ENCODE measurements at regions of chr15 and their contacts with region 1.

Region 1: GRCh38 chr15:101188637-101189408 is 63.0 kb downstream of the CHSY1 start:
- DNase-seq: peak; percentile 39
- ATAC-seq: peak; percentile 84
- H3K4me3 ChIP-seq: peak overlapping the region; percentile 65; the same call in 1 of the 2 replicates
- H3K27ac ChIP-seq: peak overlapping the region; percentile 67
- H3K4me1 ChIP-seq: peaks cover 17% of the 10 kb centered on the region
- H3K27me3 ChIP-seq: no peaks in the 10 kb centered on the region
- CTCF ChIP-seq: no peak
- EP300 ChIP-seq: peak in 1 of 2 experiments; percentile 76; a peak in 2 of 4 replicates
- POLR2A ChIP-seq: no peak
- RAD21 ChIP-seq: no peak

Region 2: DNA sequence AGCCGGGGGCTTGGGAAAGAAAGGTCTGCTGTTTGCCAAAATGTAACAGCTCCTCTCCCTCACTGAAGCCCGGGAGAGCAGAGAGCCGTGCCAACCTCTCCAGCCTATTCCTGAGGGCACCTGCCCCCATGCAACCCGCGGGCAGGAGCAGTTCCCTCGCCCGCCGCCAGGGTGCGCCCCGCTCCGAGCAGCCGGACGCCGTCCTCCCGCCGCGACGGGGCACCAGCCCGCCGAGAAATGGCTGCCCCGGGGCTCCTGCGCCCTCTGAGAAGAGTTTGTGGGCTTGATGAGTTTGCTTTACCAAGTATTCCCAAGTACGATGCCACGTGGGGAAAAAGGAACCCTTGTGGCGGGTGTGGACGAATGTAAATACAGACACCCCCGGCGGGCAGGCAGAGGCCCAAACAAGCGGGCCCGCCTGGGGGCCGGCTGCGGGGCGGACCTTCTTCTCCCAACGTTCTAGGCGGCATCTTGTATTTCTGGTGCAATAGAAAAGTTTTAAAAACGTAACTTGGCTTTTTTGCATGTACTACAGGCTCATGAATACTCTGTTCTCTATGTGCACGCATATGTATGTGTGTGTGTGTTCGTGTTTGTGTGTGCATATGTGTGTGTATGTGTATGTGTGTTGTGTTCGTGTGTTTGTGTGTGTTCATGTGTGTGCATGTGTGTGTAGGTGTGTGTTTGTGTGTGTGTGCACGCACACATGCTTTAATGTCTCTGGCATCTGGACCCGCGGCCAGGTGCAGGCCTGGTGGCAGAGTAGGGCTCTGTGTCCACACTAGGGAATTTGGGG is 99.8 kb before region 1 on chr15:
- CTCF ChIA-PET with region 1: interaction called, 3 read pairs
- POLR2A ChIA-PET with region 1: no interaction called
- RAD21 ChIA-PET with region 1: no interaction called
- SMC1A ChIA-PET with region 1: interaction called, 3 read pairs
- in situ Hi-C with region 1: no loop called
- intact Hi-C with region 1: loop called (anchors 2 kb)
- DNase-seq: no peak
- ATAC-seq: peak; percentile 98
- H3K4me3 ChIP-seq: no peak overlapping the region
- H3K27ac ChIP-seq: no peak overlapping the region
- H3K4me1 ChIP-seq: no peaks in the 10 kb centered on the region
- H3K27me3 ChIP-seq: no peaks in the 10 kb centered on the region
- CTCF ChIP-seq: peak; percentile 94 to 98 (median 97)
- EP300 ChIP-seq: no peak
- POLR2A ChIP-seq: no peak
- RAD21 ChIP-seq: peak; percentile 80

Region 3: DNA sequence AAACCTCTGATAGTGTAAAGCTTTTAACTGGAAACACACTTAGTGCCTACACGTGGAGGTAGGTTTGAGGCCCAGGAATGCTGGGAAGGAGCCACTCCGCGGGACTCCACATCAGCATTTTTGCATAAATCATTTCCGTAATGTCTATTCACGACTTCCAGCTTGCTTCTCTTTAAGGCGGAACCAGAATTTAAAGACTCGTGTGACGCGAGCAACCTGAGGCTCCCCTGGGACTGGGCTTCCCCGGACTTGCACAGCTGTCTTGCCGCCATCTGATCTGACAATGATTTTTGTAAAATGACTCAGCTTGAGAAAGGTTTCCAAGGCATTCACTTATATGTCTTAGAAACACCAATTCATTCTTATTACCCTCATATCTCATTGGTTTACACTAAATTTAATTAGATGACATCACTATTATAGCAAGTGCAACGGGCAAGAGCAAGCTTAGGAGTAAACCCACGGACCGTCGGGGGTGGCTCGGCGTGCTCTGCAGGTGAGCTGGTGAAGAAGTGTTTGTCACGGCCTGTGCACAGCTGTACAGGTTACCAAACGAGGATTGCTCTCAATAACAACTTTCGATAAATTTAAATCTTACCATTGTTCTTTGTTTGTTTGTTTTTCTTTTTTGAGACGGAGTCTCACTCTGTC is 32.2 kb before region 1 on chr15:
- CTCF ChIA-PET with region 1: interaction called, 4 read pairs
- POLR2A ChIA-PET with region 1: no interaction called
- RAD21 ChIA-PET with region 1: interaction called, 8 read pairs
- SMC1A ChIA-PET with region 1: interaction called, 13 read pairs
- in situ Hi-C with region 1: no loop called
- intact Hi-C with region 1: loop called (anchors 2 kb)
- DNase-seq: peak; percentile 84
- ATAC-seq: peak; percentile 86
- H3K4me3 ChIP-seq: no peak overlapping the region
- H3K27ac ChIP-seq: peak overlapping the region; percentile 53
- H3K4me1 ChIP-seq: peaks cover 17% of the 10 kb centered on the region
- H3K27me3 ChIP-seq: no peaks in the 10 kb centered on the region
- CTCF ChIP-seq: no peak
- EP300 ChIP-seq: peak; percentile 40 to 75; a peak in 2 of 4 replicates
- POLR2A ChIP-seq: no peak
- RAD21 ChIP-seq: no peak

Region 4: DNA sequence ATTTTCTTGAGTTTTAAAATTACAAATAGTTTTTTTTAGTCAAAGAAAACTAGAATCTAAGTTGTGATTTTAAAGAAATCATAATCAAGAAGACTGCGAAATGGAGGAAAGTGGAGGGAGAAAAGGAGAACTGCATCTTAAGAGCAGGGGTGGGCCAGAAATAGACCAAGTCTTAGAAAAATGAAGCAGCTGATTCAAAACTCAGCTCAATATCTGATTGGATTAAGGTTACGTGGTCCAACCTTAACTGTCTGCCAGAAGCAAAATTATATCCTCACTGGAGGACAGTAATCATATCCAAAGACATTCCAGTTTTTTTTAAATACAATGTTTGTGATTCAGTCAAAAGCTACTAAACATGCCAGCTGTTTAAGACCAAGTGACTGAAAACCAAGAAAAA is 21.6 kb after region 1 on chr15:
- CTCF ChIA-PET with region 1: interaction called, 3 read pairs
- POLR2A ChIA-PET with region 1: interaction called, 3 read pairs
- RAD21 ChIA-PET with region 1: interaction called, 6 read pairs
- SMC1A ChIA-PET with region 1: interaction called, 10 read pairs
- in situ Hi-C with region 1: no loop called
- intact Hi-C with region 1: no loop called
- DNase-seq: no peak
- ATAC-seq: peak; percentile 77
- H3K4me3 ChIP-seq: no peak overlapping the region
- H3K27ac ChIP-seq: peak overlapping the region; percentile 55
- H3K4me1 ChIP-seq: peaks cover 9% of the 10 kb centered on the region; the same call in 1 of the 2 replicates
- H3K27me3 ChIP-seq: no peaks in the 10 kb centered on the region
- CTCF ChIP-seq: no peak
- EP300 ChIP-seq: no peak
- POLR2A ChIP-seq: no peak
- RAD21 ChIP-seq: no peak

Region 5: DNA sequence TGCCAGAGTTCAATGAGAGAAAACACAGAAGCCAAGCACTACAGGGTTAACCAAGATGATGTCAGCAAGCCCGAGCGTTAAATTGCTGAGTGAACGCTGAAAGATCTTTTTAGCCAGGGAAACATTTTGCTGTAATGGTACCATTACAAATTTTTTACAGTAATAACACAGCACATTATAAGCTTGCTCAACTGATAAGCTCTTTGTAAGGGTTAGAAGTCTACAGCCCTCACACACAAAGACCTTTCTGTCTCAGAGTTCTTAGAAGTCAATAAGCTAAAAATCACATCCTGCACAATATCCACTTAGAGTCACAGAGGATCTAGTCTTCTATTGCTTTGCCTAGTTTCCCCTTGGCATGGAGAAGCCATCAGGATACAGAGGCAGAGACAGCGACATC is 33.1 kb after region 1 on chr15:
- CTCF ChIA-PET with region 1: no interaction called
- POLR2A ChIA-PET with region 1: no interaction called
- RAD21 ChIA-PET with region 1: no interaction called
- SMC1A ChIA-PET with region 1: no interaction called
- in situ Hi-C with region 1: no loop called
- intact Hi-C with region 1: no loop called
- DNase-seq: no peak
- ATAC-seq: no peak
- H3K4me3 ChIP-seq: no peak overlapping the region
- H3K27ac ChIP-seq: no peak overlapping the region
- H3K4me1 ChIP-seq: no peaks in the 10 kb centered on the region
- H3K27me3 ChIP-seq: no peaks in the 10 kb centered on the region
- CTCF ChIP-seq: no peak
- EP300 ChIP-seq: no peak
- POLR2A ChIP-seq: no peak
- RAD21 ChIP-seq: no peak

Region 6: DNA sequence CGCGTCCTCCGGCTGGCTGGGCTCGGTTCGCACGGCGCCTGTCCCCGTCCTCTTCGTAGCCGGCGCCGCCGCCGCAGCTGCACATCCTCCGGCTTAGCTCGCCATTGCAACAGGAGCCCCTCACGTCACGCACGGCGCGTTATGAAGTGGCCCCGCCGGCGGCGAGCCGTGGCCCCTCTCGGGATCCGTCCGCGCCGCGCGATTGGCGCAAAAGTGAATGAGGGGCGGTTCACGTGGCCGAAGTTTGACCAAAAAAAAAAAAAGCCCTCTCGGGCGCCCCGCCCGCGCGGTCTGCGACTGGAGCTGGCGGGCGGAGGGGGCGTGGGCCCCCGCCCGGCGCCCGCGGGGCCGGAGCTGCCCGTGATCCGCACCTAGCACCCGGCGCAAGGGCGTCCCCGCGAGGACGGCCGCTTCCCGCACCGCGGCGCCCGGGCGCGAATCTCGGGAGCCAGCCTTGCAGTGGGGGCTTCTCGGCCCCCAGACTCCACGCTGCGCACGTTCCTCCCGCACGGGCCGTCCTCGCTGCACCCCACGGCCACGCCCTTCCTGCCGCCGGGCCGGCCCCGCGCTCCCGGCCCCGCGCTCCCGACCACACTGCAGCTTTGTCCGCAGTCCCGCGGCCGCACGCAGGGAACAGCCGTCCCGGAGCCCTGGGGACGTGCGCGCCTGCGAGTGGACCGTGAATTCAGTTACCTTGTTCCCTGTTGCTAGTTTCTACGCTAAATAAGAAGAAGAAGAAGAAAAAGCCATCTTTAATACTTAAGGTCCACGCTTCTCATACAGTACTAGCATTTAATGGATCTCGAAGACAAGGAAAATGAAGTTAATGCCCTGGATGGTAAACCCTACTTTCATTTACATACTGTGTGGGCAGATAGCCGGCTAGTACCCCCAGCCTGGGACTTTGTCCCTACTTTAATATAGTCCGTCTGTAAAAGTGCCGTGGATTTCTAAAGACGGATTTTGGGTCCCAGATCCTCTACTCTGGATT is 63.3 kb after region 1 on chr15 and contains the start of gene CHSY1:
- CTCF ChIA-PET with region 1: interaction called, 7 read pairs
- POLR2A ChIA-PET with region 1: interaction called, 6 read pairs
- RAD21 ChIA-PET with region 1: interaction called, 19 read pairs
- SMC1A ChIA-PET with region 1: interaction called, 18 read pairs
- in situ Hi-C with region 1: no loop called
- intact Hi-C with region 1: loop called (anchors 2 kb)
- DNase-seq: peak; percentile 57
- ATAC-seq: peak; percentile 80
- H3K4me3 ChIP-seq: peak within 1 kb of the TSS; percentile 91
- H3K27ac ChIP-seq: peak within 1 kb of the TSS; percentile 43
- H3K4me1 ChIP-seq: no peaks in the 10 kb centered on the region; the same call in 1 of the 2 replicates
- H3K27me3 ChIP-seq: no peaks in the 10 kb centered on the region
- CTCF ChIP-seq: peak; percentile 17 to 47 (median 17); a peak in 3 of 6 replicates
- EP300 ChIP-seq: no peak
- POLR2A ChIP-seq: peak; percentile 87
- RAD21 ChIP-seq: peak; percentile 50; the same call in 1 of the 2 replicates
- polyA plus RNA-seq, gene CHSY1: 5.1 to 10.0 TPM